ENCODE measurements at regions of chr14 and their contacts with region 1.

Region 1: DNA sequence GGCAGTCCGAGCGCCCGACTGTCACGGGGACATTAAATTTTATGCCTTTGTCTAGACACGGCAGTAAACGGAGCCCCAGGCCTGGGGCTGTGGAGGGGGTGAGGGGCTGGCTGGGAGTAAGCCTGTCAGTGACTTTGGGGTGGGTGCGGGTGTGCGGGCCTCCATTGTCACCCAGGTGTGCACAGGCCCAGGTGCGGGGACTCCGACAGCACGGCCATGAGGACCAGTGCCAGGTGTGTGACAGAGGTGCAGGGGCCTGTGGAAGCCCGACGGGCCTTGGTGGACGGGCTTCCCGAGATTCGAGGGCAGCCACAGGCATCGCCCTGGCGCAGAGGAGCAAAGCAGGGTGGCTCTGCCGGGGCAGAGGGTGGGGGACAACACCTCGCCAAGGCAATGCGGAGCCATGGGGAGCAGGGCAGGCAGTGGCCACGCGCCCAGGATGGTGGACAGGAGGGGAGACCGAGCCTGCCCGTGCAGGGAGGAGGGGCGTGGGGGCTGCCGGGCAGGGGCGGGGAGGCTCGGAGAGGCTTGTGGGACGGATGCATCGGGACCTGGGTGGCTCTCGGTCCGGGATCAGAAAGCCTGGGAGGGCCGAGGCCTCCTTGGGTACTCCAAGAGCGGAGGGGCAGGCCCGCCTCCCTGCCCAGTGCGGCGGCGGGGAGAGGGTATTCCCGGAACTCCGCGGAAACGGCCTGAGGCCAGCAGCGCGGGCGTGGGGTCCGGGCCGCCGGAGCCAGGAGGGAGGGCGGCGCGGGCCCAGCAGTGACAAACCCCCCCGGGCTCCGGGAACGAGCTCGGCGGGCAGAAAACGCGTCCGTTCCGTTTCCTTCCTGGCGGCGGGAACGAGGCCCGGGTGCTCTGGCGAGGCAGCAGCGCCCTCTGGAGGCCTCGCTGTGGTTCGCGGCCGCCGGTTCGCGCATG is 1.5 kb downstream of the TMEM121 start:
- DNase-seq: peak; percentile 85
- H3K4me3 Mint-ChIP-seq: peak overlapping the region; percentile 79
- H3K27ac Mint-ChIP-seq: no peak overlapping the region
- H3K4me1 Mint-ChIP-seq: peaks cover 21% of the 10 kb centered on the region
- H3K27me3 Mint-ChIP-seq: peaks cover 9% of the 10 kb centered on the region

Region 2: GRCh38 chr14:105375635-105376057 is 152.3 kb before region 1 on chr14:
- CTCF ChIA-PET with region 1: interaction called, 8 read pairs
- intact Hi-C with region 1: loop called (anchors 1 kb)
- DNase-seq: peak; percentile 72
- H3K4me3 Mint-ChIP-seq: no peak overlapping the region
- H3K27ac Mint-ChIP-seq: no peak overlapping the region
- H3K4me1 Mint-ChIP-seq: peaks cover 12% of the 10 kb centered on the region
- H3K27me3 Mint-ChIP-seq: no peaks in the 10 kb centered on the region

Region 3: DNA sequence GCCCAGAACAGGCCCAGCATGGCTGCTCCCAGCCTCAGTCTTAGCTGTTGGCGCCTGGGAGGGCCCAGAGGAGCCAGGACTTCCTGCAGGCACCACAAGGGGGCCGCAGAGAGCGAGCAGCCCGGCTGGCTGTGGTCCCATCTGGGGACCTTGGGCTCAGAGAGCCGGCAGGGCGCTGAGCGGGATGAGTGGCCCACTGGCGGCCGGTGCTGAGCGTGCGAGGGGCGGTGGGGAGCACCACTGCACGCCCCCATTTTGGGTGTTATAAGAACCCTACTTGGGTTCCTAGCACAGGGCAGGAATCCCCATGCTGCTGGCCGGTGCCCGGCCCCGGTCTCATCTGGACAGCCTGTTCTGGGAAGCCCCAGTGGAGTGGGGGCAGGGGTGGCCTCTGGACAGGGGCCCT is 79.2 kb before region 1 on chr14:
- CTCF ChIA-PET with region 1: no interaction called
- intact Hi-C with region 1: loop called (anchors 1 kb)
- DNase-seq: peak; percentile 52
- H3K4me3 Mint-ChIP-seq: no peak overlapping the region
- H3K27ac Mint-ChIP-seq: no peak overlapping the region
- H3K4me1 Mint-ChIP-seq: no peaks in the 10 kb centered on the region
- H3K27me3 Mint-ChIP-seq: no peaks in the 10 kb centered on the region

Region 4: GRCh38 chr14:105480952-105481801 is 46.7 kb before region 1 on chr14:
- CTCF ChIA-PET with region 1: interaction called, 4 read pairs
- intact Hi-C with region 1: loop called (anchors 1 kb)
- DNase-seq: peak; percentile 93
- H3K4me3 Mint-ChIP-seq: peak overlapping the region; percentile 71
- H3K27ac Mint-ChIP-seq: peak overlapping the region; percentile 86
- H3K4me1 Mint-ChIP-seq: peaks cover 60% of the 10 kb centered on the region
- H3K27me3 Mint-ChIP-seq: peaks cover 20% of the 10 kb centered on the region

Region 5: GRCh38 chr14:105568859-105569708 is 41.2 kb after region 1 on chr14:
- CTCF ChIA-PET with region 1: no interaction called
- intact Hi-C with region 1: no loop called
- DNase-seq: no peak
- H3K4me3 Mint-ChIP-seq: no peak overlapping the region
- H3K27ac Mint-ChIP-seq: no peak overlapping the region
- H3K4me1 Mint-ChIP-seq: no peaks in the 10 kb centered on the region
- H3K27me3 Mint-ChIP-seq: no peaks in the 10 kb centered on the region